PC-9 (cell line): ENCODE measurements at regions of chr1 and their contacts with region 1.

Region 1: GRCh38 chr1:183942933-183943693 is 94.4 kb downstream of the COLGALT2 start:
- DNase-seq: peak; percentile 57 to 67
- H3K4me3 ChIP-seq: no peak overlapping the region
- H3K27ac ChIP-seq: no peak overlapping the region
- H3K4me1 ChIP-seq: peaks cover 8% of the 10 kb centered on the region
- H3K27me3 ChIP-seq: no peaks in the 10 kb centered on the region
- CTCF ChIP-seq: no peak

Region 2: GRCh38 chr1:183901748-183902330 is 41.3 kb before region 1 on chr1:
- CTCF ChIA-PET with region 1: no interaction called
- POLR2A ChIA-PET with region 1: no interaction called
- intact Hi-C with region 1: no loop called
- DNase-seq: no peak
- H3K4me3 ChIP-seq: no peak overlapping the region
- H3K27ac ChIP-seq: no peak overlapping the region
- H3K4me1 ChIP-seq: no peaks in the 10 kb centered on the region
- H3K27me3 ChIP-seq: no peaks in the 10 kb centered on the region
- CTCF ChIP-seq: no peak

Region 3: GRCh38 chr1:184051485-184052193 is 108.5 kb after region 1 on chr1 and contains the start of gene TSEN15:
- CTCF ChIA-PET with region 1: interaction called, 4 read pairs
- POLR2A ChIA-PET with region 1: interaction called, 7 read pairs
- intact Hi-C with region 1: loop called (anchors 5 kb)
- DNase-seq: peak; percentile 78
- H3K4me3 ChIP-seq: peak within 1 kb of the TSS; percentile 81
- H3K27ac ChIP-seq: peak within 1 kb of the TSS; percentile 100
- H3K4me1 ChIP-seq: peaks cover 36% of the 10 kb centered on the region
- H3K27me3 ChIP-seq: no peaks in the 10 kb centered on the region
- CTCF ChIP-seq: no peak
- total RNA-seq, gene TSEN15: 46.0 and 52.0 TPM in 2 replicates